HepG2 (cell line): ENCODE measurements at regions of chr21 and their contacts with region 1.

Region 1: DNA sequence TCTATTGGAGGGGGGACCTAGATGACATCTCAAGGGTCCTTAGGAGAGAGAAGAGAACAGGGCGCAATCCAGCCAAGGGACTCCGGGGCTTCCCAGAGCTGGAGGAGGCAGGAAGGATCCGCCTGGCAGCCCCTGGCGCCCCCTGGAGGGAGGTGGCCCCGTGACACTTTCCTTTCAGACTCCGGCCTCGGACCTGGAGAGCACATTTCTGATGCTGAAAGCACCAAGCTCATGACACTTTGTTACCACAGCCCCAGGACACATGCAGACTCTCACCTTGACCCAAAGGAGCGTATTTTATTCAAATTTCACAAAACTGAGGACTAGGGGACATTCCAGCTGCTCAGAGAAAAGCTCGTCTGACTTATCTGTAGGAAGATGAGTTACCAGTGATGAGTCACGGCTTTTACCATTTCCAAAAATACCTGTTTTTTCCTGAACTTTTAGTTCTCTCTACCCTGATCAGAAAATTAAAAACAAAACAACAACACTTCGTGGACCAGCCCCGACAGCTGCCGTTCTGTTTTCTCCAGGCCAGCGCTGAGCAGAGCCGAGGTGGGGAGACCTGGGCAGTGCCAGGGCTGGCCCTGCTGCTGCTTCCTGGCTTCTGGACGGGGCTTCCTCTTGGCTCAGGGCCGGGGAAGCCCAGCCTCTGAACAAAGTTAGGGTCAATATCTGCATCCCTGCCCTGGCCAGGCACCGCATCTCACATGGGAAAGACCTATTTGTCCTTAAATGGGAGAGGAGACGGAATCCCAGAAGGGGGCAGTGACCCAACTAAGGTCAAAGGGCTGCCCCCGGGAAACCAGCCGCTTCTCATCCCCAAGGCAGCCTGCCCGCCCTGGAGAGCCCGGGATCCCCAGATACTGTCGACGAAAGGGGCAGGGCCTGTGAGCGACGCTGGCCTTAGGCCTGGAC is 21.6 kb upstream of the POFUT2 start:
- DNase-seq: peak; percentile 69
- ATAC-seq: peak; percentile 76
- H3K4me3 ChIP-seq: peak overlapping the region; percentile 60 to 78 (median 61)
- H3K27ac ChIP-seq: peak overlapping the region; percentile 91
- H3K4me1 ChIP-seq: peaks cover 39% of the 10 kb centered on the region
- H3K27me3 ChIP-seq: no peaks in the 10 kb centered on the region
- CTCF ChIP-seq: peak; percentile 75
- EP300 ChIP-seq: no peak
- POLR2A ChIP-seq: no peak
- RAD21 ChIP-seq: peak; percentile 76

Region 2: DNA sequence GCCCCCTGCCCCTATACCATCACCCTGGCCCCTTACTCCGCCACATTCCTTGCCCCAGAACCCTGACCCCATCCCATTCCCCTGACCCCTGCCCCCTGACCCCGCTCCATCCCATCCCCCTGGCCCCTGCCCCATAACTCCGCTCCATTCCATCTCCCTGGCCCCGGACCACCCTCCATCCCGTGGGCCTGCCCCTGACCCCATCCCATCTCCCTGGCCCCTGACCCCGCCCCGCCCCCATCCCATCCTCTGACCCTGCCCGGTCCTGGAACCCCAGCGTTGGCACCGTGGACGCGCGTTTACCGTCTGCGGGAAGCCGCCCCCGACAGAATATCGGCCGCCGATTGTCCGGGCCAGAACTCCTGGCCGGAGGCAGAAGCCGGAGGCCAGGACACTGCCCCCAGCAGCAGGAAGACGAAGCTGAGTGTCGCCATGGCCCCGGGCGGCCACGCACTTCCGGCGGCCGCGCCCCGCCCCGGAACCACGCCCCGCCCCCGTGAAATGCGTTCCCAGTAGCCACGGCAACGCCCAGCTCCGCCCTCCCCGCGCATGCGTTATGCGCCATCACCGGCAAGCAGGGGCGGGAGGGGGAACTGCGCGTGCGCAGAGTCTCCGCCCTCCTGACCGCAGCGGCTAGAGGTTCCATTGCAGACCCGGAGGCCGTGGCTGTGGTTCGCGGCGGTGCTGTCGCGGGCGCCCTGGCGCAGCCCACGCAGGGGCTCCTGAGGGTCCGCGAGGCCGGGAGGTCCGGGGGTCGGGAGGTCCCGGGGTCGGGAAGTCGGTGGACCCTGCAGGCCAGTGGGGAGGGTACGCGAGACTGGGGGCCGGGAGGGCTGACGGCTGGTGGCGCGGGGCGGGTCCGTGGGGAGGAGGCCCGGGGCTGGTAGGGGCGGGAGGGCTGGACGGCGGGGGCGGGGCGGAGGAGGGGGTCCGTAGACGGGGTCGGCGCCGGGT is 21.6 kb before region 1 on chr21 and contains the start of gene POFUT2:
- CTCF ChIA-PET with region 1: interaction called, 20 read pairs
- POLR2A ChIA-PET with region 1: interaction called, 21 read pairs
- in situ Hi-C with region 1: no loop called
- intact Hi-C with region 1: loop called (anchors 1 kb)
- DNase-seq: peak; percentile 86
- ATAC-seq: peak; percentile 73
- H3K4me3 ChIP-seq: peak within 1 kb of the TSS; percentile 81 to 95 (median 85)
- H3K27ac ChIP-seq: peak within 1 kb of the TSS; percentile 51
- H3K4me1 ChIP-seq: peaks cover 28% of the 10 kb centered on the region
- H3K27me3 ChIP-seq: no peaks in the 10 kb centered on the region
- CTCF ChIP-seq: no peak
- EP300 ChIP-seq: 0 out of 4 replicates have a peak, but pooled peaks of 1 of the 2 experiments have one; percentile 3
- POLR2A ChIP-seq: peak in 1 of 2 experiments; percentile 76; a peak in 2 of 4 replicates
- RAD21 ChIP-seq: no peak
- total RNA-seq, gene POFUT2: 9.8 and 24.0 TPM in 2 replicates

Region 3: GRCh38 chr21:45319461-45320211 is 10.3 kb after region 1 on chr21:
- CTCF ChIA-PET with region 1: no interaction called
- POLR2A ChIA-PET with region 1: interaction called, 36 read pairs
- in situ Hi-C with region 1: no loop called
- intact Hi-C with region 1: no loop called
- DNase-seq: no peak
- ATAC-seq: no peak
- H3K4me3 ChIP-seq: no peak overlapping the region
- H3K27ac ChIP-seq: peak overlapping the region; percentile 49
- H3K4me1 ChIP-seq: peaks cover 72% of the 10 kb centered on the region
- H3K27me3 ChIP-seq: no peaks in the 10 kb centered on the region
- CTCF ChIP-seq: no peak
- EP300 ChIP-seq: no peak
- POLR2A ChIP-seq: no peak
- RAD21 ChIP-seq: no peak

Region 4: GRCh38 chr21:45404730-45405270 is 95.5 kb after region 1 on chr21 and contains the start of gene COL18A1:
- CTCF ChIA-PET with region 1: no interaction called
- POLR2A ChIA-PET with region 1: interaction called, 13 read pairs
- in situ Hi-C with region 1: no loop called
- intact Hi-C with region 1: no loop called
- DNase-seq: no peak
- ATAC-seq: peak; percentile 16
- H3K4me3 ChIP-seq: peak within 1 kb of the TSS; percentile 78 to 79 (median 79)
- H3K27ac ChIP-seq: peak within 1 kb of the TSS; percentile 80
- H3K4me1 ChIP-seq: peaks cover 47% of the 10 kb centered on the region
- H3K27me3 ChIP-seq: peaks cover 7 to 42% of the 10 kb centered on the region in 2 experiments
- CTCF ChIP-seq: no peak
- EP300 ChIP-seq: no peak
- POLR2A ChIP-seq: no peak; a peak in 1 of 4 replicates
- RAD21 ChIP-seq: no peak
- total RNA-seq, gene COL18A1: 21.2 and 102 TPM in 2 replicates

Region 5: GRCh38 chr21:45427331-45428271 is 118.3 kb after region 1 on chr21:
- CTCF ChIA-PET with region 1: no interaction called
- POLR2A ChIA-PET with region 1: interaction called, 11 read pairs
- in situ Hi-C with region 1: no loop called
- intact Hi-C with region 1: loop called (anchors 1 kb)
- DNase-seq: peak; percentile 93
- ATAC-seq: peak; percentile 67
- H3K4me3 ChIP-seq: peak overlapping the region in 2 of 3 experiments; percentile 31 to 42; a peak in 1 of 6 replicates
- H3K27ac ChIP-seq: peak overlapping the region; percentile 88
- H3K4me1 ChIP-seq: peaks cover 94% of the 10 kb centered on the region
- H3K27me3 ChIP-seq: no peaks in the 10 kb centered on the region
- CTCF ChIP-seq: peak; percentile 36; the same call in 1 of the 2 replicates
- EP300 ChIP-seq: peak in 1 of 2 experiments; percentile 64; a peak in 1 of 4 replicates
- POLR2A ChIP-seq: no peak
- RAD21 ChIP-seq: no peak

Region 6: GRCh38 chr21:45640888-45641479 is 331.7 kb after region 1 on chr21:
- CTCF ChIA-PET with region 1: no interaction called
- POLR2A ChIA-PET with region 1: no interaction called
- in situ Hi-C with region 1: no loop called
- intact Hi-C with region 1: no loop called
- DNase-seq: no peak
- ATAC-seq: peak; percentile 88
- H3K4me3 ChIP-seq: no peak overlapping the region
- H3K27ac ChIP-seq: no peak overlapping the region
- H3K4me1 ChIP-seq: no peaks in the 10 kb centered on the region
- H3K27me3 ChIP-seq: peaks cover 0 to 7% of the 10 kb centered on the region in 2 experiments; a peak in 4 of 5 replicates
- CTCF ChIP-seq: no peak
- EP300 ChIP-seq: no peak
- POLR2A ChIP-seq: no peak
- RAD21 ChIP-seq: no peak